OCI-LY7 (cell line): ENCODE measurements at regions of chr11 and their contacts with region 1.

Region 1: GRCh38 chr11:111283945-111284481 is 14.3 kb upstream of the POU2AF3 start:
- DNase-seq: no peak
- H3K4me3 ChIP-seq: no peak overlapping the region
- H3K27ac ChIP-seq: no peak overlapping the region
- H3K4me1 ChIP-seq: peaks cover 4% of the 10 kb centered on the region
- CTCF ChIP-seq: no peak

Region 2: DNA sequence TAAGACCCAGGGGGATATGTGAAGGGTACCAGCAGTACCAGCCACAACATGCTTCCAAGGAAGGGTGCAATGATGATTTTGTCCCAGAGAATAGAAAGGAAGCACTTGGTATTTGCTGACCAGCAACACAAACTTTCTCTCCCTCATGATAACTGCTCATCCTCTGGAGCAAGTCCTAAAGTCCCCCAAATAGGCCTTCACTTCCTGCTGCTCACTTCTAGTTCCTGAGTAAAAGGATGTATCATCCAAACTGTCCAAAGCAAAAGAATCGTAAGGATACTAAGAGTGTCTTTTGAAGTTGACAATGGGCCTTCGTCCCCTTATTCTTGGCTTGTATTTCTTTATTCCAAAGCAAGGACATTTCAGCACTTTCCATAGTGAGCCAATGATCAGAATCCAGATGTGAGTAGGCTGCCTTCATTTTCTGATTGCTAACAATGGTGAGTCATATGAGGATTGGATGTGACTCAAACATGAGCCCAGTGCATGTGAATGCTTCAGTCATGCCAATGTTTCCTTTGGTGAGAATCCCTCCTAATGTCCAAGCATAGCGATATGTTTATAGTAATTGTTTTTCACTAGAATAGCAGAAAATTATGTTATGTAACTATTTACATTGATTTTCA is 281.9 kb before region 1 on chr11:
- CTCF ChIA-PET with region 1: no interaction called
- POLR2A ChIA-PET with region 1: no interaction called
- intact Hi-C with region 1: no loop called
- DNase-seq: no peak
- H3K4me3 ChIP-seq: no peak overlapping the region
- H3K27ac ChIP-seq: no peak overlapping the region
- H3K4me1 ChIP-seq: peaks cover 35% of the 10 kb centered on the region
- CTCF ChIP-seq: no peak

Region 3: GRCh38 chr11:111272420-111272819 is 11.6 kb before region 1 on chr11:
- CTCF ChIA-PET with region 1: no interaction called
- POLR2A ChIA-PET with region 1: interaction called, 11 read pairs
- intact Hi-C with region 1: no loop called
- DNase-seq: peak; percentile 71
- H3K4me3 ChIP-seq: peak overlapping the region; percentile 41
- H3K27ac ChIP-seq: peak overlapping the region; percentile 90
- H3K4me1 ChIP-seq: peaks cover 66% of the 10 kb centered on the region
- CTCF ChIP-seq: no peak

Region 4: DNA sequence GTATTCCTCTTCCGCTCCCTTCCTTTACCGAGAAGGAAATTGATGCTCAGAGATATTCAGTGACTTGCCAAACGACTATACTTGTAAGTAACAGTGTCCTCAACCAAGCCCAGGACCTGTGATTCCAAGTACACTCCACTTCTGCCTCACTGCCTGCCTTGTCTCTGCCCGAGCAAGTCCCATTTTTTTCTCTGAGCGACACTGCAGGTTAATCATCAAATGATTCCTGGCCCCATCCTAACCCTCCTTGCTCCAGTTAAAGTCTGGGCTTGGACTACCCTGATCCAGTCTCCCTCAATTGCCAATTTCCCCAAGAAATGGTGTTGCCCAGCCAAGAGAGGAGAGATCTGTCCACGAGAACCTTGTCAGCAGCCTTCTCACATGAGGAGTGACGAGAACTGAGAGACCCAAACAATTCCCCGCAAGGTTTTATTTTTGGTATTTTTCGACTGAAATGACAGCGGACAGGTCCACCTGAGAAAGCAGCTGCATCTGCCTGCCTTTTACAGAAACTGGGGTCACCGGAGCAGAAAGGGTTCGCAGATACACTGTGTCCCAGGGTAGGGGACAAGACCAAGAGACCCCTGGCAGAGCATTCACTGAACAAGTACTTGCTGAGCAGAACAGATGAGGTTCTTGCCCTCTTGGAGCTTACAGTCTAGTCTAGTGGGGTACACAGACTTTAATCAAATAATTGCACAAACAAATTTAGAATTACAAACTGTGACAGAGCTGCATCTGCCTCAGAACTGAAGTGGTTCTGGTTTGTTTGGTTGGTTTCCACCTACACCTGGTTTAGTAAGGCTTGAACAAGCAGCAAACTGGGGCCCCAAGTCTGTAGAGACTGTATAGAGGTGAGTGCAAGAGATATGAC is 83.6 kb after region 1 on chr11:
- CTCF ChIA-PET with region 1: no interaction called
- POLR2A ChIA-PET with region 1: no interaction called
- intact Hi-C with region 1: loop called (anchors 1 kb)
- DNase-seq: peak; percentile 77
- H3K4me3 ChIP-seq: peak overlapping the region; percentile 39
- H3K27ac ChIP-seq: peak overlapping the region; percentile 73
- H3K4me1 ChIP-seq: peaks cover 100% of the 10 kb centered on the region
- CTCF ChIP-seq: no peak

Region 5: DNA sequence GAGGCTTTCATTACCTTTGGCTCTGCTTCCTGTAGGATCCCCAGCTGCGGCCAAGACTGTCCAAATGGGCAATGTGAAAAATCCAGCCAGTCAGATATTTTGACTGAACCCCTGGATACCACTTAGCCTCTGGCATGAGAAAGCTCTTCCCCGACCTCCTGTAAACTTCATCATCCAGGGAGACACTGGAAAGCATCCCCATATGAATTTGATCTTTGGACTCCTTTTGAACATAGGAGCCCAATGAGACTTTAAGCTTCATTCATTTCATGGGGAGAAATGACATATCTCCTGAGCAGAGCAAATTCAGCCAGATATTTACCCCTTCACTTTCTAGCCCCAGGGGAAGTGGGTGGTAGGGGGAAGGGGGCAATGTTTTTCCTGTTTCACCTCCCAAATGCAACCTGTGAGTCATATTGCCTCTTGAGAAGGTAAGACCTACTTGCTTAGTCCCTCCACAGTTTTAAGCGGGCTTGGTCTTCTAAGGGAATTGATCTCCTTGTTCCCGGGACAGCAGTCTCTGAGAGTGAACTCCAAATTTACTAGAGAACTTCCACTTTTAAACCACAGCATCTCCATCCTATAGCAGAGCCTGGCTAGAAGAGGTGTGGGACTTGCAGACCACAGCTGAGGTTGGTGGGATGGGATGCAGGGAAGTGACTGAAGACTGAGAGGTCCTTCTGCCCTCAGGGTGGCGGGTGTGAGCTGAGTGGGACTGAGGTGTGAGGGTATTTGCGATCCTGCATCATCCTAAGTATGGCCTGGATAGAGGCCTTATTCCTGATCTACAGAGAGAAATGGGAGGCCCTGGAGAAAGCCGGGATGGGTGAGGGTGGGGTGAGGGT is 115.4 kb after region 1 on chr11:
- CTCF ChIA-PET with region 1: no interaction called
- POLR2A ChIA-PET with region 1: interaction called, 4 read pairs
- intact Hi-C with region 1: loop called (anchors 1 kb)
- DNase-seq: peak; percentile 72
- H3K4me3 ChIP-seq: peak overlapping the region; percentile 47
- H3K27ac ChIP-seq: peak overlapping the region; percentile 90
- H3K4me1 ChIP-seq: peaks cover 73% of the 10 kb centered on the region
- CTCF ChIP-seq: peak; percentile 79

Region 6: GRCh38 chr11:111429066-111429506 is 145.1 kb after region 1 on chr11:
- CTCF ChIA-PET with region 1: interaction called, 22 read pairs
- POLR2A ChIA-PET with region 1: interaction called, 33 read pairs
- intact Hi-C with region 1: loop called (anchors 1 kb)
- DNase-seq: peak; percentile 85
- H3K4me3 ChIP-seq: no peak overlapping the region
- H3K27ac ChIP-seq: no peak overlapping the region
- H3K4me1 ChIP-seq: peaks cover 26% of the 10 kb centered on the region
- CTCF ChIP-seq: peak; percentile 100

Region 7: GRCh38 chr11:111446404-111447111 is 162.5 kb after region 1 on chr11:
- CTCF ChIA-PET with region 1: interaction called, 4 read pairs
- POLR2A ChIA-PET with region 1: interaction called, 5 read pairs
- intact Hi-C with region 1: loop called (anchors 1 kb)
- DNase-seq: peak; percentile 96
- H3K4me3 ChIP-seq: no peak overlapping the region
- H3K27ac ChIP-seq: no peak overlapping the region
- H3K4me1 ChIP-seq: peaks cover 53% of the 10 kb centered on the region
- CTCF ChIP-seq: peak; percentile 95